Naive thymus-derived CD4-positive, alpha-beta T cell (primary cell): ENCODE measurements at regions of chr16 and their contacts with region 1.

Region 1: DNA sequence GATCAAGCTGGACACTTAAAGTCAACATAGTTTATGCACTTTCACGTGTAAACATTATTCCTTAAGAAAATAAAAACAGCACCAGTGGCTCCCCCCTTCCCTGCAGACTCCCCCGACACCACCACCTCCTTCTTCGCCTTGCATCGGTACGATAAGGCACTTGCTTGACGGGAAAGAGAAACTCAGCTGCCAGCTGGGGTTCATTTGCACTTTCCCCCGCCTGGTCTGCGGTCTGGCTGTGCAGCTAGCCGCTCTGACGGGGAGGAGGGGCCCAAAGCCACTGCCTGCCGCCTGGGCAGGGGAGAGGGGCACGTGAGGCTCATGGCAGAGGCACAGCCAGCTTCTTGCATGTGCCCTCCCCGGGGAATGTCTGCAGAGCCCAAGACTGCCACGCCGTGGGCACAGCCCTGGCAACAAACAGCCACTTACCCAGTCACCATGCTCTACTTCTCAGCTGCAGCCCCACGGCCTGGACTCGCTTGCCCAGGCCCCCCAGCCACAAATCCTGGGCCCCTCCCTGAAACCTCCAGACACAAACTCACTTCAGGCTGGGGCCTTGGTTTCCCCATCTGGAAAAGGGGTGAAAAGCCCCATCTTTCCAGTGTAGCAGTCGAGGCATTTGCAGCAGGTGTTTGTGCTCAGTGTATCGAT is 16.5 kb upstream of the PRM1 start:
- DNase-seq: peak; percentile 50 to 70 (median 65)
- ATAC-seq: peak; percentile 95
- H3K4me3 ChIP-seq: peak overlapping the region; percentile 49
- H3K4me3 Mint-ChIP-seq: peak overlapping the region; percentile 76 to 87 (median 80)
- H3K27ac ChIP-seq: no peak overlapping the region
- H3K27ac Mint-ChIP-seq: peak overlapping the region; percentile 63 to 87 (median 77)
- H3K4me1 ChIP-seq: peaks cover 8% of the 10 kb centered on the region in 2 donors
- H3K4me1 Mint-ChIP-seq: peaks cover 9 to 53% (median 25%) of the 10 kb centered on the region in 7 donors
- H3K27me3 ChIP-seq: no peaks in the 10 kb centered on the region
- H3K27me3 Mint-ChIP-seq: peaks cover 0 to 19% (median 0%) of the 10 kb centered on the region in 5 donors

Region 2: DNA sequence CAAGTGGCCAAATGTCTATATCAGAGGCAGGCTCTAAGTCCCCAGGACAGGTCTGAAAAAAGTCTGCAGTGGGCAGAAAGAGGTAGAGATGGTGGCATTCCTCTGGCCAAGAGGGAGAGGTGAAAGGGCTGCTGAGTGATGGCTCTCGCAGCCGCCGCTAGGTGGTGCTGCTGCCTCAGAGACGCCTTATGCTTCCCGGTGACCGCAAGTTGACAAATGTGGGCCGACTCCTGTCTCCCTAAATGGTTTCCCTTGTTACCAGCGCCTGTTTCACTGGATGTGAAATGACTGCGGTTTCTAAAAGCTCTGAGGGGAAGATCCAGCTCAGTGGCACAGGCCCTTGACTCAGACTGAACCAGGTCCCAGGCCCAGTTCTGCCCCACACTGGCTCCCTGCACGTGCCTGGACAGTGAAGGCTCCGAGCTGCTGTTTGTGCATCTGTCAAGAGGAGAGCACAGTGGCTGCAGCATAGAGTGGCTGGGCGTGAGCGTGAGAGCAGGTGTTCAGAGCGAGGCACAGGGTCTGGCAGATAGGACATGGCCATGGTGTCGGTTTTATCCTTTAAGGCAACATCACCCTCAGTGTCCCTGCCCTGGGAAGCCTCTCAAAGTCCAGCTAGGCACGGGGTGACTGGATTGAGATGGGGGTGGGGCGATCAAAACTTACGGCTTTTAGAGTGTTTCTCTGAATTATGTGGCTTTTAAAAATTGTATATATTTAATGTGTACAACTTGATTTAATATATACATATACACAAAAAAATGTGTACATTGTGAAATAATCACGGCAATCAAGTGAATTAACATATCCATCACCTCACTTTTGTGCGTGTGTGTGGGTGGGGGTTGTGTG is 333.4 kb before region 1 on chr16:
- CTCF ChIA-PET with region 1: interaction called, 12 read pairs
- POLR2A ChIA-PET with region 1: no interaction called
- intact Hi-C with region 1: loop called in 1 of 2 experiments (anchors 2 kb)
- DNase-seq: peak; percentile 55 to 84 (median 69)
- ATAC-seq: peak; percentile 81
- H3K4me3 ChIP-seq: peak overlapping the region; percentile 3
- H3K4me3 Mint-ChIP-seq: peak overlapping the region in 6 of 10 donors; percentile 4 to 83 (median 52)
- H3K27ac ChIP-seq: no peak overlapping the region
- H3K27ac Mint-ChIP-seq: peak overlapping the region in 6 of 9 donors; percentile 47 to 91 (median 72)
- H3K4me1 ChIP-seq: peaks cover 11 to 18% of the 10 kb centered on the region in 2 donors
- H3K4me1 Mint-ChIP-seq: peaks cover 15 to 62% (median 28%) of the 10 kb centered on the region in 7 donors
- H3K27me3 ChIP-seq: no peaks in the 10 kb centered on the region
- H3K27me3 Mint-ChIP-seq: no peaks in the 10 kb centered on the region

Region 3: GRCh38 chr16:11224096-11224893 is 73.3 kb before region 1 on chr16:
- CTCF ChIA-PET with region 1: no interaction called
- POLR2A ChIA-PET with region 1: interaction called, 4 read pairs
- intact Hi-C with region 1: loop called in 1 of 2 experiments (anchors 2 kb)
- DNase-seq: peak; percentile 36 to 67 (median 48)
- ATAC-seq: peak; percentile 68
- H3K4me3 ChIP-seq: peak overlapping the region; percentile 49
- H3K4me3 Mint-ChIP-seq: peak overlapping the region; percentile 78 to 87 (median 80)
- H3K27ac ChIP-seq: peak overlapping the region; percentile 91
- H3K27ac Mint-ChIP-seq: peak overlapping the region; percentile 97 to 99 (median 98)
- H3K4me1 ChIP-seq: peaks cover 30 to 36% of the 10 kb centered on the region in 2 donors
- H3K4me1 Mint-ChIP-seq: peaks cover 37 to 73% (median 52%) of the 10 kb centered on the region in 7 donors
- H3K27me3 ChIP-seq: no peaks in the 10 kb centered on the region
- H3K27me3 Mint-ChIP-seq: no peaks in the 10 kb centered on the region

Region 4: DNA sequence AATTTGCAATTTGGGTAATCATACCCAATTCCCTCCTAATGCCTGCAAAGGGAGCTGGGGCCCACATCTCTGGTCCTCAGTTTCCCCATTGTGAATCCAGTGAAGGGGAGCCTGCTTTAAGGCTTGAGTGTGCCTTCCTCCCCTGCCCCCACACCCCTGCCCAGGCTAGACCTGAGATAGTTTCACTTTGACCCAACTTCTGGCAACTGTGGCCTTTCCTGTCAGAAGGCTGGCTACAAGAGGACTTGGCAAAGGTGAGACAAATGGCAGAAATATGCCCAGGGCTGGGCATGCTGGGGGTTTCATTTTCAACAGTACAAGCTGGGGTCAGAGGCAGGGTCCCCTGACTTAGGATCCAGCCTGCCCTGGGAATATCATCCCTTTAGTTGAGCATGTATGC is 51.6 kb before region 1 on chr16:
- CTCF ChIA-PET with region 1: no interaction called
- POLR2A ChIA-PET with region 1: no interaction called
- intact Hi-C with region 1: no loop called
- DNase-seq: no peak
- ATAC-seq: no peak
- H3K4me3 ChIP-seq: no peak overlapping the region
- H3K4me3 Mint-ChIP-seq: no peak overlapping the region
- H3K27ac ChIP-seq: no peak overlapping the region
- H3K27ac Mint-ChIP-seq: peak overlapping the region in 2 of 9 donors; percentile 7 to 46
- H3K4me1 ChIP-seq: peaks cover under 1 to 2% of the 10 kb centered on the region in 2 donors
- H3K4me1 Mint-ChIP-seq: peaks cover 3 to 48% (median 6%) of the 10 kb centered on the region in 7 donors
- H3K27me3 ChIP-seq: no peaks in the 10 kb centered on the region
- H3K27me3 Mint-ChIP-seq: no peaks in the 10 kb centered on the region

Region 5: DNA sequence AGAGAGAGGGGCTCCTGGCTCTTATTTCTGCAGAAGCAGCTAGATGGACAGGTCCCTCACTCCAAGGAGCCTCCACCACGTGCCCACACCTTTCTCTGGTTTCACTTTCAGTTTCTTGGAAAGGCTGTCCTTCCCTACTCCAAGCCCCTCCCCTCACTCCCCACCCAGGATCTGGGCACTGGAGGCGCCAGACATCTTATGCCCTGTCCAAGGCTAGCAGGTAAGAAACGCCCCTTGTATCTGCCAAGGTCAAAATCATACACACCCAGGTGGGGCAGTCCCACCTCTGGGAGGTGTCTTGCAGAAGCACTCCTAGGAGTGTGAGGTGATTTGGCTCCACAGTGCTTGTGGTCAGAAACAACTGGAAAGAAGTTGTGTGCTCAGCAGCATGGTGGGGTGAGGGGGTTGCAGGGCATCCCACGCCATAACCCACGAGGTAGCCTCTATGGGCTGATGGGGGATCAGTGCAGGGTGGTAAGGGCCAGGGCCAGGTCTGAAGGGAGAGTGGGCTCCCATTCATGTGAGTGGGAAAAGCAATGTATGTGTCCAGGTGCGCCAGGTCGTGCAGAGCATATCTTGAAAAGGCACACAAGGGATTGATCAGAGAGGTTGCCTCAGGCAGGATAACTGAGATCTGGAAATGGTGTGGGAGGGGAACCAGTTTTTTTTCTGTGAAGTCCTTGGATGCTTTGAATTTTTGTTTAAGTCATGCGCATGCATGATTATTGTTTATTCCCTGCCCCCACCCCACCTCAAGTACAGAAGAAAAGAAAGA is 15.3 kb after region 1 on chr16:
- CTCF ChIA-PET with region 1: interaction called, 10 read pairs
- POLR2A ChIA-PET with region 1: interaction called, 7 read pairs
- intact Hi-C with region 1: loop called (anchors 1 to 2 kb)
- DNase-seq: peak in 2 of 9 donors; percentile 15 to 17
- ATAC-seq: peak; percentile 17
- H3K4me3 ChIP-seq: peak overlapping the region; percentile 23
- H3K4me3 Mint-ChIP-seq: peak overlapping the region; percentile 35 to 72 (median 58)
- H3K27ac ChIP-seq: no peak overlapping the region
- H3K27ac Mint-ChIP-seq: peak overlapping the region; percentile 11 to 91 (median 75)
- H3K4me1 ChIP-seq: peaks cover 23 to 34% of the 10 kb centered on the region in 2 donors
- H3K4me1 Mint-ChIP-seq: peaks cover 5 to 69% (median 31%) of the 10 kb centered on the region in 7 donors
- H3K27me3 ChIP-seq: no peaks in the 10 kb centered on the region
- H3K27me3 Mint-ChIP-seq: peaks cover 0 to 2% (median 0%) of the 10 kb centered on the region in 5 donors

Region 6: GRCh38 chr16:11345040-11345862 is 47.6 kb after region 1 on chr16 and contains the start of gene RMI2:
- CTCF ChIA-PET with region 1: no interaction called
- POLR2A ChIA-PET with region 1: no interaction called
- intact Hi-C with region 1: loop called in 1 of 2 experiments (anchors 2 kb)
- DNase-seq: peak; percentile 90 to 98 (median 95)
- ATAC-seq: peak; percentile 99
- H3K4me3 ChIP-seq: peak within 1 kb of the TSS; percentile 44
- H3K4me3 Mint-ChIP-seq: peak within 1 kb of the TSS; percentile 79 to 98 (median 92)
- H3K27ac ChIP-seq: peak within 1 kb of the TSS; percentile 65
- H3K27ac Mint-ChIP-seq: peak within 1 kb of the TSS; percentile 58 to 99 (median 83)
- H3K4me1 ChIP-seq: no peaks in the 10 kb centered on the region
- H3K4me1 Mint-ChIP-seq: peaks cover 10 to 49% (median 24%) of the 10 kb centered on the region in 7 donors
- H3K27me3 ChIP-seq: no peaks in the 10 kb centered on the region
- H3K27me3 Mint-ChIP-seq: no peaks in the 10 kb centered on the region
- total RNA-seq, gene RMI2: 1.8 to 57.0 (median 3.3) TPM